IMR-90 (cell line): ENCODE measurements at regions of chr4 and their contacts with region 1.

Region 1: GRCh38 chr4:169612871-169613859 is 782 bp upstream of the NEK1 start:
- DNase-seq: peak; percentile 79
- ATAC-seq: peak; percentile 68
- H3K4me3 ChIP-seq: peak overlapping the region; percentile 93
- H3K27ac ChIP-seq: no peak overlapping the region
- H3K4me1 ChIP-seq: no peaks in the 10 kb centered on the region
- H3K27me3 ChIP-seq: no peaks in the 10 kb centered on the region
- CTCF ChIP-seq: peak; percentile 77
- POLR2A ChIP-seq: no peak; the same call in 1 of the 2 replicates
- RAD21 ChIP-seq: peak; percentile 79

Region 2: DNA sequence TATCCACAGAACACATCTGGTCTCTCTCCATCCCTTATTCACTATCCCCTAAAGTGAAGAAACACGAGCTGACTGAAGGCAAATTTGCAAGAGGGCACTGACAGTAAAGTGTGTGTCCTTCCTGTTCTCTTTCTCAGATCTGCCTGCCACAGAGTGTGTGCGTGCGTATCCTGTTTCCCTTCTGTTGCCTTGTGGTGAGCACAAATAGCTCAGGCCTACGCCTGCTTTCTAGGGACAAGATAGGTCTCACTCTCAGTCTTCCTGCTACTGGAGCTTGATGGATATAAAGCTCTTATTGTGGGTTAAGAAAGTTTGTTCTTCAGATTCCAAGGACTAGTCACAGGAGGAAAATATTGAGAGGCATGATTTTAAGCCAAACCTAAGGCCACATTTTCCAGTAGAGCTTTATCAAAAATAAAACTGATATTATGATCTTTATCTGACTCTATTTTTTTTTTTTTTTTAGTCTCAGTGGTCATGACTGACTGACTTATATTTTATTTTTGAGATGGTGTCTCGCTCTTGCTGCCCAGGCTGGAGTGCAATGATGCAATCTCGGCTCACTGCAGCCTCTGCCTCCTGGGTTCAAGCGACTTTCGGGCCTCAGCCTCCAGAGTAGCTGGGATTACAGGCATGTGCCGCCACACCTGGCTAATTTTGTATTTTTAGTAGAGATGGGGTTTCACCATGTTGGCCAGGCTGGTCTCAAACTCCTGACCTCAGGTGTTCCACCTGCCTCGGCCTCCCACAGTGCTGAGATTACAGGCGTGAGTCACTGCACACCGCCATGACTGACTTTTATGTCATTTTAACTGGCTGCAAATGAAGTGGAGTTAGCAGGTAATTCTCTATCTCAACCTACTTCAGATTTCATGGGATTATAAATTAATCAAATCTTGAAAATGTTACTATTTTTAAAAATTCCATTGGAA is 202.1 kb before region 1 on chr4:
- CTCF ChIA-PET with region 1: no interaction called
- POLR2A ChIA-PET with region 1: no interaction called
- dilution Hi-C with region 1: no loop called
- in situ Hi-C with region 1: no loop called
- intact Hi-C with region 1: no loop called
- DNase-seq: peak; percentile 85
- ATAC-seq: peak; percentile 71
- H3K4me3 ChIP-seq: no peak overlapping the region
- H3K27ac ChIP-seq: no peak overlapping the region
- H3K4me1 ChIP-seq: peaks cover 5% of the 10 kb centered on the region
- H3K27me3 ChIP-seq: no peaks in the 10 kb centered on the region
- CTCF ChIP-seq: no peak
- POLR2A ChIP-seq: no peak
- RAD21 ChIP-seq: no peak

Region 3: GRCh38 chr4:169774466-169775445 is 161.6 kb after region 1 on chr4:
- CTCF ChIA-PET with region 1: no interaction called
- POLR2A ChIA-PET with region 1: no interaction called
- dilution Hi-C with region 1: no loop called
- in situ Hi-C with region 1: no loop called
- intact Hi-C with region 1: loop called (anchors 1 kb)
- DNase-seq: no peak
- ATAC-seq: 0 out of 2 replicates have a peak, but pooled peaks have one; percentile 21
- H3K4me3 ChIP-seq: no peak overlapping the region
- H3K27ac ChIP-seq: no peak overlapping the region
- H3K4me1 ChIP-seq: no peaks in the 10 kb centered on the region; the same call in 1 of the 2 replicates
- H3K27me3 ChIP-seq: peaks cover 22% of the 10 kb centered on the region
- CTCF ChIP-seq: peak; percentile 19; the same call in 1 of the 2 replicates
- POLR2A ChIP-seq: no peak
- RAD21 ChIP-seq: no peak

Region 4: DNA sequence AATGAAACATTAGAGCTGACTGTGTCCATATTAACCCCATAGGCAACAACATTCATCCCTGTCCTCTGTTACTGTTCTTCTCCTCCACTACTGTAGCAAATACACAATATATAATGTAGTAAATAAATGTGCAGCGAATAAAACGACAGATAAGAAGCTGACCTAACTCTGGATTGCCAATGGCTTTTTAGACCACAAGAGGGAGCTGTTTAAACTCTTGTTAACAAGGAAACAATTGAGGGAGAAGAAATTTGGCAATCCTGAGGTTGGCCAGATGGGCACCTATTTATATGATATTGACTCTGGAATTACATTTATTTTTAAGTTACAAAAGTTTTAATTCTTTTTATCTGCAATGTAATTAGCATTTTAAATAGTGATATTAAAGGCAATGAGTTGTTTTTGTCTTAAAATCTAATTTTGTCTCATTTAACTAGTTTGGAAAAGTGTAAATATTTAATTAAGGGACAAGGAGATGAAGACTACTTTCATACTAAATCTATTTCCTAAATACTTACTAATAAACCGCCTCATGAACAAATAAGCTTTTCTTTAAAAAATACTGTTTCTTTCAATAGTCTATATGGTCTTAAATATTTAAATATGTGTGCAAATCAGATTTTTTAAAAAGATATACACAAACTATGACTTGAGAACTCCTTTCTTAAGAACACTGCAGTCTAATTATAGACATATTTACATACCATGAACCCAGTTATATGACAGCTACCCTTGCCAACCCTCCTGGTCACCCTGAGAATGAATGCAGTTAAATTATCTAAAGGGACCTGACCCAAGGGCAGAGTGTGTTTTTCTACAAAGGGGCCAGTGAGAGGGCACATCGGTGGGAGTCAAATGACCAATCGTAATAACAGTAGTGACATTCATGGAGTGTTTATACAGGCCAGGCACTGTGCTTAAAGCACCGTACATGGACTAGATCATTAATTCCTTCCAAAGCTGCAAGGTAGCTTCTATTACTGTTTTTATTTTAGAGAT is 197.5 kb after region 1 on chr4:
- CTCF ChIA-PET with region 1: interaction called, 3 read pairs
- POLR2A ChIA-PET with region 1: no interaction called
- dilution Hi-C with region 1: no loop called
- in situ Hi-C with region 1: no loop called
- intact Hi-C with region 1: loop called (anchors 1 kb)
- DNase-seq: peak; percentile 81
- ATAC-seq: peak; percentile 61
- H3K4me3 ChIP-seq: no peak overlapping the region
- H3K27ac ChIP-seq: no peak overlapping the region
- H3K4me1 ChIP-seq: no peaks in the 10 kb centered on the region
- H3K27me3 ChIP-seq: no peaks in the 10 kb centered on the region; the same call in 1 of the 2 replicates
- CTCF ChIP-seq: peak; percentile 86
- POLR2A ChIP-seq: no peak
- RAD21 ChIP-seq: peak; percentile 63

Region 5: GRCh38 chr4:170047771-170048354 is 434.7 kb after region 1 on chr4:
- CTCF ChIA-PET with region 1: no interaction called
- POLR2A ChIA-PET with region 1: no interaction called
- dilution Hi-C with region 1: no loop called
- in situ Hi-C with region 1: loop called (anchors 25 kb)
- intact Hi-C with region 1: loop called (anchors 2 kb)
- DNase-seq: peak; percentile 71
- ATAC-seq: no peak
- H3K4me3 ChIP-seq: no peak overlapping the region
- H3K27ac ChIP-seq: no peak overlapping the region
- H3K4me1 ChIP-seq: no peaks in the 10 kb centered on the region
- H3K27me3 ChIP-seq: peaks cover 6% of the 10 kb centered on the region
- CTCF ChIP-seq: peak; percentile 86
- POLR2A ChIP-seq: no peak
- RAD21 ChIP-seq: peak; percentile 74